ENCODE measurements at regions of chr17 and their contacts with region 1.

Region 1: DNA sequence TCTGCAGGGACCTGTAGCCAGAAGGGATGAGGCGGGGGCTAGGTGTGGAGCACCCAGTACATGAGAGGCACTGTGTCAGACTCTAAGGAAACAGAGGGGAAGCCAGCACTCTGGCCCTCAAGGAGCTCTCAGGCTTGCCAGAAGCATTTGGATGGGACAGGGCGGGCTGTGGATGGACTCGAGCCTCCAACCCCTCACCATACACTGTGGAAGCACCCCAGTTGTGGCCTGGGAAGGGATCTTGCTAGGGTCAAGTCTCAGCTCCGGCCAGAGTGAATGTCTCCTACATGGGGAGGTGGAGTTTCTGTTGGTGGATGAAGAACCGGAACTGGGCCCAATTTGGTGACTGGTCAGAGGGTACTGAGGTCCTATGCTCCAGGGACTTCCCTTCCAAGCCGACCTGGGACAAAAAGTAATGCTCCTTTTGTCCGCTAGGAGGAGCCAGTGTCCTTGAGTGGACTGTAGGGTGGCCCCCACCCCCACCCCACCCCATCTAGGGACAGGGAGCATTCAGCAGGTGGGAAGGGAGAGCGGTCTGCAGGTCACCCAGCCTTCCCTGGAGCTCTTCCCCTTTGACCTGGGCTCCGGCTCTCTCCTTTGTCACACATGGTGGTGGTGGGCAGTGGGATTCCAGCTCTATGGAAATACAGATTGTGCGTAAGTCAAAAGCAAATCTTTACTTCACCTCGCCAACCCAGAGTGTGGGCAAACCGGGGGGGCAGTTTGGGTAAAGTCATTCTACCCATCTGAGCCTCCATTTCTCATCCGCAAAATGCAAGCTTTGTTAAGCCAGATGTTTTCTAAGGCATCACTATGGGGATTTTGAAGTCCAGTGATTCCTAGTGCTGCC is 20.4 kb upstream of the PHB1 start:
- DNase-seq: peak; percentile 92
- H3K4me3 ChIP-seq: no peak overlapping the region
- H3K27ac ChIP-seq: peak overlapping the region in 1 of 2 experiments; percentile 81; a peak in 2 of 4 replicates
- H3K4me1 ChIP-seq: peaks cover 3 to 39% of the 10 kb centered on the region in 2 experiments; a peak in 2 of 4 replicates
- H3K27me3 ChIP-seq: peaks cover 16% of the 10 kb centered on the region; the same call in 1 of the 2 replicates
- CTCF ChIP-seq: peak; percentile 77
- EP300 ChIP-seq: no peak
- RAD21 ChIP-seq: peak; percentile 86

Region 2: GRCh38 chr17:49334744-49335512 is 100.1 kb before region 1 on chr17:
- CTCF ChIA-PET with region 1: no interaction called
- POLR2A ChIA-PET with region 1: no interaction called
- DNase-seq: no peak
- H3K4me3 ChIP-seq: no peak overlapping the region
- H3K27ac ChIP-seq: no peak overlapping the region
- H3K4me1 ChIP-seq: peaks cover 0 to 20% of the 10 kb centered on the region in 2 experiments; a peak in 2 of 4 replicates
- H3K27me3 ChIP-seq: no peaks in the 10 kb centered on the region
- CTCF ChIP-seq: no peak
- EP300 ChIP-seq: no peak
- RAD21 ChIP-seq: no peak

Region 3: DNA sequence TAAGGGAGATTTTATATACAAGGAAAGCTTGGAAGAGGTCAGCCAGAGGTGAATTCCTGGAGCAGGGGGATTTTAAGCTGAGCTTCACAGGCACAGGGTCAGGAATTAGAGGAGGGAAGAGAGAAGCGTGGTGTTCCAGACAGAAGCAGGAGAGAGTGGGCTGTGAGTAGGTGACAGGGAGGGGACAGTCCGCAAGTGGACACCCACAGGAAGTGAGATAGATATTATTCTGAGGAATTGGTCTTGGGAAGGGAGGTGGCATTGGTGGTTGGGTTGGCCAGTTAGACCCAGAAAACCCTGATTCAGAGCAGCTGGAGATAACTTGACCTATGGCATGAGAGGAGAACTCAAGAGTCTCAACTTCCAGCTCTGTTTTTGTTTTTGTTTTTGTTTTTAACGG is 35.1 kb before region 1 on chr17:
- CTCF ChIA-PET with region 1: interaction called, 13 read pairs
- POLR2A ChIA-PET with region 1: interaction called, 4 read pairs
- DNase-seq: no peak
- H3K4me3 ChIP-seq: no peak overlapping the region
- H3K27ac ChIP-seq: no peak overlapping the region
- H3K4me1 ChIP-seq: no peaks in the 10 kb centered on the region
- H3K27me3 ChIP-seq: no peaks in the 10 kb centered on the region
- CTCF ChIP-seq: no peak
- EP300 ChIP-seq: no peak
- RAD21 ChIP-seq: no peak

Region 4: DNA sequence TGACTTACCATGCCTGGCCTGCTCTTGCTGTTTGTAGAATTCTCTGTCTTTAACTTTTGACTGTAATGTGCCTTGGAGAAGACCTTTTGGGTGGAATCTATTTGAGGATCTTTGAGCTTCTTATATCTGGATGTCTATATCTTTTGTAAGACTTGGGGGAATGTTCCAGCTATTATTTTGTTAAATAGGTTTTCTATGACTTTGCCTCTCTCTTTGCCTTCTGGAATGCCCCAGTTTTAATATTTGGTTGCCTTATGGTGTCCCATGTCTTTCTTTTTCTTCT is 10.1 kb before region 1 on chr17:
- CTCF ChIA-PET with region 1: interaction called, 38 read pairs
- POLR2A ChIA-PET with region 1: no interaction called
- DNase-seq: no peak
- H3K4me3 ChIP-seq: peak overlapping the region in 1 of 2 experiments; percentile 5; a peak in 1 of 4 replicates
- H3K27ac ChIP-seq: peak overlapping the region in 1 of 2 experiments; percentile 35; a peak in 2 of 4 replicates
- H3K4me1 ChIP-seq: no peaks in the 10 kb centered on the region
- H3K27me3 ChIP-seq: peaks cover 15% of the 10 kb centered on the region; the same call in 1 of the 2 replicates
- CTCF ChIP-seq: no peak
- EP300 ChIP-seq: no peak
- RAD21 ChIP-seq: no peak

Region 5: DNA sequence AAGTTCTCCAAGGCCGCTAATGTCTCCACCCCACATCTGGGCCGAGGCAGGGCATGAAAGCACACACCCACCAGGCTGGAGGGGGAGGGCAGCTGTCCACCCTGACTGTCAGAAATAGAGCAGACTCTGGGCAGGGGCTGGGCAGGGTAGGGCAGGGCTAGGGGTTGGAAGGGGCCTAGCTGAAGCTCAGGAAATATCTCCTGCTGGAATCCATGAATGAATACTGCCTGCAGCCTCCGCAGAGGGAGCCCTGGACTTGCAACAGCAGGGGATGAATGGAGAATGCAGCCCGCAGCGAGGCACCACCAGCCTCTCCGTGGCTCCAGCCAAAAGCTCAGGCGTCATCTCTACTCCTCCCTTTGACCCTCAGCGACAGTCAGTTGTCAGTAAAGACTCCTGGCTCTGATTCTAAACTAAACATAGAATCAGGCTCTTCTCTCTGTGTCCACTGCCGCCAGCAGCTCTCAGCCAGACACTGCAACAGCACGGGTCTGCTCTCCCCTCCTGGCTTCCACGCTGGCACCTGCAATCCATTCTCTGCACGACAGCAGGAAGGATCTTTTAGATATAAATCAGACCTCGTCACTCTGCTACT is 36.1 kb after region 1 on chr17:
- CTCF ChIA-PET with region 1: interaction called, 31 read pairs
- POLR2A ChIA-PET with region 1: no interaction called
- DNase-seq: peak; percentile 87
- H3K4me3 ChIP-seq: no peak overlapping the region
- H3K27ac ChIP-seq: peak overlapping the region in 1 of 2 experiments; percentile 82; a peak in 2 of 4 replicates
- H3K4me1 ChIP-seq: peaks cover 0 to 32% of the 10 kb centered on the region in 2 experiments; a peak in 1 of 4 replicates
- H3K27me3 ChIP-seq: peaks cover 68% of the 10 kb centered on the region
- CTCF ChIP-seq: no peak
- EP300 ChIP-seq: no peak
- RAD21 ChIP-seq: peak; percentile 44

Region 6: DNA sequence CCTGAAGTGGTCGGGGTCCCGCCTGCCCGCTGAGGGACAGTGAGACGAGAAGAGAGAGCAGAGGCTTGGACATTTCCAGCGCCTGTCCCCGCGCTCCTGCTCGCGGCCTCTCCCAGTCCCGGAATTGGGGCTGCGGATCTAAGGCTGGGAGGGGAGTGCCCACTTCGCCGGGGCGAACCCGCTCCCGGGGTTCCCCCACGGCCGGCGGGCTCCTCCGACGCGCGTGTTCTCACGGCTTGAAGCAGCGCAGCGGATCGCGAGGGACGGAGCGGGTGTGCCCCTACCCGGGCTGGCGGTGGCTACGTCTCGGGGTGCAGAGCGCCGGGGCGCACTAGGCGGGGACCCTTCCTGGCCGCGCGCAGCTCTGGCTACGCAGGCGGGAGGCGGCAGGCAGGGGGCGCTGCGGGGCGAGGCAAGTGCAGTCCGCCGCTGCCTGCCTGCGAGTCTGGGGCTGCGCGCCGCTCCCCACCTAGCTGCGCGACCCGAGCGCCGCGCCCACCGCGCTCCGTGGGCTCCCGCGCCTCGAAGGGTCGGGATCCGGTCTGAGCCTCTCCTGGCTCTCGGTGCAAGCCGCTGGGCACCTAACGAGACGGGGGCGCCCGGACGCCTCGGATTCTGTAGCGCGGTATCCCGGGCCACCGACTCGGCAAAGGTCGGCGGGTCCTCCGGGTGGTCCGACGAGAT is 61.3 kb after region 1 on chr17:
- CTCF ChIA-PET with region 1: interaction called, 128 read pairs
- POLR2A ChIA-PET with region 1: interaction called, 8 read pairs
- DNase-seq: peak; percentile 96
- H3K4me3 ChIP-seq: peak overlapping the region; percentile 54 to 63
- H3K27ac ChIP-seq: no peak overlapping the region; a peak in 1 of 4 replicates
- H3K4me1 ChIP-seq: peaks cover 5 to 42% of the 10 kb centered on the region in 2 experiments; a peak in 2 of 4 replicates
- H3K27me3 ChIP-seq: peaks cover 80% of the 10 kb centered on the region
- CTCF ChIP-seq: peak; percentile 81
- EP300 ChIP-seq: no peak
- RAD21 ChIP-seq: peak; percentile 73

Region 7: DNA sequence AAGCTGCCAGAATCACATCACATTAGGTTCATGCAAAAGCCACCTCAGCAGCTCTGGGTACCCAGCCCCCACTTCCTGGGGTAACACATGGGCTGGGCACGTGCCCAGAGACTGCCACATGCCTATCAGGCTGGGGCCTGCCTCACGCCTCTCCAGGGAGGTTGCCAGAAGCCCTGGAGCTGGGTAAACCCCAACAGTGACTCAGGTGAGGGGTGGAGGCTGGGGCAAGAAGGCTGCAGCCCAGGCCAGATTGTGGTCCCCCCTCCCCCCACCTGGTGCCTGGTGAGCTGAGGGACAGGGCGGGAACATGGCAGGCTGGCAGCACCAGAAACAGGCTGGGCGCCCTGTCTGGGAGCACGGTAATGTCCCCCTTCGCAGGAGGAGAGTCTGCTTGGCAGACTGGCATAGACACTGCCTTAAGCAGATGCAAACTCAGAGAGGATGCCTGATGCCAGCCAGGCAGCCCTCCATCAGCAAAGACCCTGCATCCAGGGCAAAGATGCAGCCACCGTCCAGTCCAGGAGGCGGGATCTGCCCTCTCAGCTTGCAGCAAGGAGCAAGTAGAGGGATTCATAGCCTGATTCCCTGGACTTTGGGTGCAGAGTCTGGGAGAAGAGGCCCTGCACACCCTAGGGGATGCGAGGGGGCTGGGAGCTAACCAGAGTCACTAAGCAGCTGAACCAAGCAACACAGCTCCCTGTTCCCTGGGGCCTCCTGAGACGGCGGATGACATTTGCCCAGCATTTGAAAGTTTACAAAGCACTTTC is 88.8 kb after region 1 on chr17:
- CTCF ChIA-PET with region 1: interaction called, 12 read pairs
- POLR2A ChIA-PET with region 1: no interaction called
- DNase-seq: peak; percentile 56
- H3K4me3 ChIP-seq: no peak overlapping the region
- H3K27ac ChIP-seq: peak overlapping the region in 1 of 2 experiments; percentile 66; a peak in 1 of 4 replicates
- H3K4me1 ChIP-seq: peaks cover 0 to 63% of the 10 kb centered on the region in 2 experiments; a peak in 1 of 4 replicates
- H3K27me3 ChIP-seq: peaks cover 8% of the 10 kb centered on the region; the same call in 1 of the 2 replicates
- CTCF ChIP-seq: no peak
- EP300 ChIP-seq: no peak
- RAD21 ChIP-seq: no peak

Region 8: GRCh38 chr17:49616086-49616485 is 181.0 kb after region 1 on chr17:
- CTCF ChIA-PET with region 1: interaction called, 10 read pairs
- POLR2A ChIA-PET with region 1: no interaction called
- DNase-seq: no peak
- H3K4me3 ChIP-seq: no peak overlapping the region
- H3K27ac ChIP-seq: no peak overlapping the region
- H3K4me1 ChIP-seq: no peaks in the 10 kb centered on the region
- H3K27me3 ChIP-seq: no peaks in the 10 kb centered on the region
- CTCF ChIP-seq: peak; percentile 54
- EP300 ChIP-seq: no peak
- RAD21 ChIP-seq: no peak

Measured in SK-N-SH (cell line).